Activated naive CD4-positive, alpha-beta T cell treated with anti-CD3 and anti-CD28 coated beads for 36 hours (primary cell): ENCODE measurements at regions of chr3 and their contacts with region 1.

Region 1: DNA sequence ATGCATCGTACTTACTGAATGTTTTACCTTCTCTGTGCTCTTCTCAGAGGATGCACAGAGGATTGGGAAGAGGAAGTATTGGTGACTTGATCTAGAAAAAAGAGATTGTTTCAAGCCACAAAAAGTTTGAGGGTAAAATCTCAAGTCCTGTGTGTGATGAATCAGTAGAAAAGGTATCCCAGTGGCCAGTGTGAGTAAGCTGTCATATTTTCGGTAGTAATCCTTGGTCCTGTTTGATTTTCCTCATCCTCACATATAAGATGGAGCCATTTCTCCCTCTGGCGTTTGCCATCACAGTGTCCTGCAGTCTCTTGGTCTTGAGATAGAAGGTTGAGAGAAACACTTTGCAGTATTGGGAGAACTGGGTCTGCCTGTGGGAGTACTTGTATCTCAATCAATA is 166.8 kb downstream of the LPP start:
- DNase-seq: no peak
- H3K4me3 Mint-ChIP-seq: no peak overlapping the region
- H3K27ac Mint-ChIP-seq: no peak overlapping the region
- H3K4me1 Mint-ChIP-seq: peaks cover 49% of the 10 kb centered on the region
- H3K27me3 Mint-ChIP-seq: no peaks in the 10 kb centered on the region

Region 2: GRCh38 chr3:188006726-188007393 is 313.9 kb before region 1 on chr3:
- CTCF ChIA-PET with region 1: no interaction called
- intact Hi-C with region 1: no loop called
- DNase-seq: peak; percentile 21
- H3K4me3 Mint-ChIP-seq: no peak overlapping the region
- H3K27ac Mint-ChIP-seq: no peak overlapping the region
- H3K4me1 Mint-ChIP-seq: peaks cover 14% of the 10 kb centered on the region
- H3K27me3 Mint-ChIP-seq: no peaks in the 10 kb centered on the region

Region 3: DNA sequence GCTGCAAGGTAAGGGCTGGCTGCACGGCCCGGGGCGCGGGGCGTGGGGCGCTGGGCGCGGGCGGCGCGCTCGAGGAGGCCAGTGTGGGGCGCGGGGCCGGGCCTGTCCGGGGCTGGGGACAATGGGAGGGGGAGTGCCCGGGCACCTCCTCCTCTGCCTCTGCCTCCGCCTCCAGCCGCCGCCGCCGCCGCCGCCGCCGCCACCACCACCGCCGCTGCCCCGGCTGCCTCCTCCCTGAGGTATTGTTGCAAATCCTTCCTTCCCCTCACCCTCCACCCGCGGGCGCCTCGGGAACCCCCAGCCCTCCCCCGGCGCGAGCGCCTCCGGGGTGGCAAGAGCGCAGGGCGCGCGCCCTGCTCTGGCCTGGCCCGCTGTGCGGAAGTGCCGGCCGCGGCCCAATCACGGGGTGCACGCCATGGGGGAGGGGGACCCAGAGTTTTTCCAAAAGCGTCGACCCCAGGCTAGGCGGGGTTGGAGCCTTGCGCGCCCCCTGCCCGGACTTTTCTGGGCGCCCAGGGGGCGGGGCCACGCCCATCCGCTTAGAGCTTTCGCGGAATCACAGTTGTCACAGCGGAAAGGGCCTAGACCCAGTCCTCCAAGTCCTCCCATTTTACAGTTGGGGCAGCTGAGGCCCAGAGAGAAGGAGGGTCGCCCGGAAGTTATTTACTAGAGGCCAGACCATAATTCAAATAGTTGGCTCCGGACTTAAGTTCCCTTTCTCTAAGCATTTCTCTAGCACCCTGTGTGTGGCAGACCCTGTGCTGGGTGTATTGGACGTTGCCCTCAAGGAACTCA is 166.5 kb before region 1 on chr3 and contains the start of gene LPP:
- CTCF ChIA-PET with region 1: no interaction called
- intact Hi-C with region 1: loop called (anchors 1 kb)
- DNase-seq: peak; percentile 88
- H3K4me3 Mint-ChIP-seq: peak within 1 kb of the TSS; percentile 83
- H3K27ac Mint-ChIP-seq: peak within 1 kb of the TSS; percentile 89
- H3K4me1 Mint-ChIP-seq: peaks cover 54% of the 10 kb centered on the region
- H3K27me3 Mint-ChIP-seq: no peaks in the 10 kb centered on the region
- total RNA-seq, gene LPP: 27.5 to 31.8 TPM

Region 4: GRCh38 chr3:188286087-188286513 is 34.7 kb before region 1 on chr3:
- CTCF ChIA-PET with region 1: interaction called, 3 read pairs
- intact Hi-C with region 1: loop called (anchors 1 kb)
- DNase-seq: peak; percentile 32
- H3K4me3 Mint-ChIP-seq: no peak overlapping the region
- H3K27ac Mint-ChIP-seq: no peak overlapping the region
- H3K4me1 Mint-ChIP-seq: peaks cover 45% of the 10 kb centered on the region
- H3K27me3 Mint-ChIP-seq: no peaks in the 10 kb centered on the region

Region 5: DNA sequence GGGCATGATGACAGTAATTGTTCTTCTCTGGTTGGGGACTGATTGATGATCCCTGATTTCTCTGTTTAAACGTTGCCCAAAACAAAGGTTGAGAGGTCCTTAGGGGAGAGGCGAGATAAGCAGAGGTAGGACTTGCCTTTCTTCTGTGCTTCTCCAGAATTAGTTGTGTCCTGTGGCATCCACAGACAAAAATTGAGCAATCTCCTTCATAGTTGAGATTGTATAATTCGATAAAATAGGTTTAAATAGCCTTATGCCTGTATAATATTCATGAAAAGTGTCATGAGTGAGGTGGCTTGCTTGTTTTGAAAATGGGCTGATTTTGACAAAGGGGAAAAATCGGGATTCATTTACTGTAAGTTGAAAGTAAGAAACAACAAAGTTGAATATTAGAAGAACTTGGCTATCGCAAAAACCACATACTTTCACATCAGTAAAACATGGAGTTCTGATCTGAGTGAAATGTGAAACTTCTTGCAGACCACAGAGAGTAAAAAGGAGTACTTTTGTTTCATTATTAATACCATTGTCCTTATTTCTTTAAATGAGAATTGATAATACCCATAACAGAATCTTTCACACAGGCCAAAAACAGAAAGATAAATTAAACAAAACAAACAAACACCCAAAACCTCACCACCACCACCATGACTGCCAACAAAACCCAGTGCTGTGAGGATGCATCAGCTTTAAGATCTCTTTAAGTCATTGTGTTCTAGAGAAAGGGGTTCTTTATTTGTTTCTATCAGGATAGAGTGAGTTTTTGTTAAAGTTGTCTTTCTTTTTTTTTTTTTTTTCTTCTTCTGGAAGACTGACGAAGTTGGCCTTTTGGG is 11.1 kb before region 1 on chr3:
- CTCF ChIA-PET with region 1: no interaction called
- intact Hi-C with region 1: loop called (anchors 1 kb)
- DNase-seq: no peak
- H3K4me3 Mint-ChIP-seq: no peak overlapping the region
- H3K27ac Mint-ChIP-seq: peak overlapping the region; percentile 22
- H3K4me1 Mint-ChIP-seq: peaks cover 25% of the 10 kb centered on the region
- H3K27me3 Mint-ChIP-seq: no peaks in the 10 kb centered on the region

Region 6: DNA sequence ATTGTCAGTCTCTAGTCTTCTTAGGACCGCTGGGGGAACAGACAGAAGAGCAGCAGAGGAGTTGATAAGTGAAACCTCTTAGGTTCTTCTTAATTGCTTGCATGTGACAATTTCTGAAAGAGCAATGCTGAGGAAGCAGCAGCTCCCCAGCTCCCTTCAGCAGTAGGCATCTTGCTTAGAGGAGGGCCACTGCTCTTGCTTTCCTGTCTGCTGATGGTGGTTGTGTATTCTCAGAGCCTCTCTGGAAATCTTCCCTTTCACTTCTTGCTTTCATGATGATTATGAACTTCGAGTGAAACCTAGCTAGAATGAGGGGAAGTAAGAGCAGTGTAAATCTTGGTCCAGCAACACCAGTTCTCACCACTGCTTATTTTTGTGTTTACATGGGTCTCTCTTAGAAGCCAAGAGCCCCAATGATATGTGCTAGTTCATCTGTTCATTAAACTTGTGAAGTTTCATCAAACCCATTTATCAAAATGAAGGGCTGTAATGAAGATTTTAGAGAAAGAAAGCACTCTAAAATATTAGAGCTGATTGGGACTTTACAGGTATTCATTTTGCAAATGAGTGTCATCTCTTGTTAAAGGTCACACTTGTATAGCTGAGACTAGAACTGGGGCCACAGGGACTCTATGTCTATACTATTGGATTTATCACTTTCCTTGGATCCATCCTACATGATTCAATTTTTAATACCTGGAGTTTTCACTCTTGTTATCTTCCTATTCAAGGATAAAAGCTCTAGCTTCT is 79.9 kb after region 1 on chr3:
- CTCF ChIA-PET with region 1: no interaction called
- intact Hi-C with region 1: loop called (anchors 1 kb)
- DNase-seq: peak; percentile 60
- H3K4me3 Mint-ChIP-seq: no peak overlapping the region
- H3K27ac Mint-ChIP-seq: peak overlapping the region; percentile 43
- H3K4me1 Mint-ChIP-seq: peaks cover 70% of the 10 kb centered on the region
- H3K27me3 Mint-ChIP-seq: no peaks in the 10 kb centered on the region